ENCODE measurements at regions of chrX and their contacts with region 1.

Region 1: GRCh38 chrX:85111347-85111746 is 107.7 kb downstream of the APOOL start:
- DNase-seq: no peak
- H3K4me3 ChIP-seq: no peak overlapping the region
- H3K27ac ChIP-seq: no peak overlapping the region
- H3K27me3 ChIP-seq: no peaks in the 10 kb centered on the region
- CTCF ChIP-seq: peak; percentile 65

Region 2: DNA sequence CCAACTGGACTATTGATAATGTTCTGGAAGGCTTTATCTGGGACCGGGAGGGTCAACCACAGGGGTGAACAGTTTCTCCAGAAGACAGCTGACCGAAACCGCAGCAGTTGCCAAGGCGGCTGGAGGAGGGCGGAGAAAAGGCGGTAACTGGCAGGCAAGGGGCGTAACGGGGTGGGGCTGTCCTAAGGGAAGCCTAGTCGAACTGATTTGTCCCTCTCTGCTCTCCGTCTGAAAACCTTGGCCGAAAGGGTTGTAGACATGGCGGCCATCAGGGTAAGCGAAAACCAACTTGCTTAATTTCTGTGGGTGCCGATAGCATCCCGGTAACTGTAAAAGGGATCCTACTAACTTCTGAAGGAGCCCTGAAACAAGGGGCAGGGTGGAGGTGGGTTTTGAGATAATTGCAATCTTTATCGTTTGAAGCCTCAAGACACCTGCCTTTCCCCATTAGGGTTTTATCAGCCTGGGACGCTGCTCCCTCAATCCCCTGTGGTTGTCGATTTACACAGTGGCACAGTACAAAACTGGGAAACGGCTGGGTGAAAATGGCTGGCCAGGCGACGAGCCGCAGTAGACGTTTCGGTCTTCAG is 107.6 kb before region 1 on chrX and contains the start of gene APOOL:
- CTCF ChIA-PET with region 1: no interaction called
- POLR2A ChIA-PET with region 1: no interaction called
- DNase-seq: peak; percentile 63
- H3K4me3 ChIP-seq: peak within 1 kb of the TSS; percentile 77
- H3K27ac ChIP-seq: peak within 1 kb of the TSS; percentile 31
- H3K27me3 ChIP-seq: no peaks in the 10 kb centered on the region
- CTCF ChIP-seq: no peak
- polyA plus RNA-seq, gene APOOL: 6.0 and 6.5 TPM in 2 replicates

Region 3: DNA sequence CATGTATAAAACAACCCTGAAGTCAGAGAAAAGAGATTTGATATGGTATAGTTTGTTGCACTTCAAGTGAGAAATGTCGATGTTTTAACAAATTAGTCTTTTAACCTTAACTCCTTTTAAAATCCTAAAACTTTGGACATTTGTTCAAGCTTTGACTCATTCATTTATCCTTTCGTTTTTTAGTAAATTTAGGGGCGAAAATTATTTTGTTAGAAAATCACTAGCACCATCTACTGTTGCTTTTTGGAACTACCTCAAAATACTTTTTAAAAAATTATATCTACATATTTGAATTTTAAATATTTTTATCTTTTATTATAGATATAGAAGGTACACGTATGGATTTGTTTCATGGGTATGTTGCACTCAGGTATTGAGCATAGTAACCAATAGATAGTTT is 433.3 kb after region 1 on chrX:
- CTCF ChIA-PET with region 1: interaction called, 30 read pairs
- POLR2A ChIA-PET with region 1: no interaction called
- DNase-seq: no peak
- H3K4me3 ChIP-seq: no peak overlapping the region
- H3K27ac ChIP-seq: no peak overlapping the region
- H3K27me3 ChIP-seq: no peaks in the 10 kb centered on the region
- CTCF ChIP-seq: peak; percentile 33

Measured in AG04450 (cell line).